Activated CD8-positive, alpha-beta T cell treated with anti-CD3 and anti-CD28 coated beads, Interleukin-2, amount 10 ng/mL, durations not matched to agents 7 days and 5 days (primary cell): ENCODE measurements at regions of chr17 and their contacts with region 1.

Region 1: GRCh38 chr17:28623696-28624095 is 9.7 kb upstream of the RSKR start:
- DNase-seq: no peak
- ATAC-seq: no peak
- H3K4me3 Mint-ChIP-seq: no peak overlapping the region
- H3K27ac Mint-ChIP-seq: no peak overlapping the region
- H3K4me1 Mint-ChIP-seq: no peaks in the 10 kb centered on the region
- H3K27me3 Mint-ChIP-seq: no peaks in the 10 kb centered on the region

Region 2: GRCh38 chr17:28524476-28525368 is 99.0 kb before region 1 on chr17:
- CTCF ChIA-PET with region 1: no interaction called
- POLR2A ChIA-PET with region 1: no interaction called
- DNase-seq: no peak
- ATAC-seq: no peak
- H3K4me3 Mint-ChIP-seq: no peak overlapping the region
- H3K27ac Mint-ChIP-seq: no peak overlapping the region
- H3K4me1 Mint-ChIP-seq: no peaks in the 10 kb centered on the region
- H3K27me3 Mint-ChIP-seq: no peaks in the 10 kb centered on the region

Region 3: DNA sequence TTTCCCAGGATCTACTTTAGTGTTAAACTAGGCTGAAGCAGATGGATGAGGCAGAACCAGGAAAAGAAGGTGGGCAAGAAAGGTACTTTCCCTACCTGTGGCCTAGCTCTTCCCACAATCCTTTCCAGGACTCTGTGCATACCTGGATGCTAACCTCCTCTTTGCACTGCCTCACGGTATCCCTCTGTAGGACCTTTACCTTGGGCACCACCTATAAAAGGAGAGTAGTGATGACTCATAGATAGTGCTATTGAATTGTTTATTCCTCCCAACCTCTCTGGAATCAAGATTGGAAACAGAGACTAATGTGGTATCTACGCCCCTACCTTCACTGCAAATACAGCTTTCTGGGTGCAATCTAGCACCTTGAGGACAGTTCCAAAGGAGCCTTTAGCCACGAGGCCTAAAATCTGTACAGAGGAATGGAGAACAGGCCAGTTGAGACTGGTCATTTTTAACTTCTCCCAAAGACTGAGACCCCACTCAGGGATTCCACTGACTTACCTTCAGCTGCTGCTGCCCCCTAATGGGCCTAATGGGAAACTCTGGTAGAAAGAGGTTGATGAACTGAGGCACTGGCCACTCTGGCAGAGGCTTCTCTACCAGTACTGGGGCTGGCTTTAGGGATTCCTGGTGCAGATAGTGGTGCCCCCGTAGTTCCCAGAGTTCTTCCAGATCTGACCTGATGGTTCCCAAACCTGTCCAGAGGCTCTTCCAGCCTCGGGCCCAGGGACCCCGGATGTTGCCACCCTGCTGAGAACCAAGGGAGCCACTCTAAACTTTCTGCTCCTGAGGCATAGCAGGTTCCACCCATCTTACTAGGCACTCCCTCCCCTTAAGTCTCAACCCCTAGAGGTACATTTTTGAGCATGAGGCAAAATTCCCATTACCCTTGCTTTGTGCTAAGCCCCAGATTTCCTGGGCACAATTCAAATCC is 10.5 kb before region 1 on chr17:
- CTCF ChIA-PET with region 1: interaction called, 14 read pairs
- POLR2A ChIA-PET with region 1: no interaction called
- DNase-seq: peak; percentile 39
- ATAC-seq: peak; percentile 69
- H3K4me3 Mint-ChIP-seq: no peak overlapping the region
- H3K27ac Mint-ChIP-seq: no peak overlapping the region
- H3K4me1 Mint-ChIP-seq: peaks cover 3% of the 10 kb centered on the region
- H3K27me3 Mint-ChIP-seq: no peaks in the 10 kb centered on the region